Heart right ventricle (tissue), 16 donors: ENCODE measurements at regions of chr5 and their contacts with region 1.

Region 1: DNA sequence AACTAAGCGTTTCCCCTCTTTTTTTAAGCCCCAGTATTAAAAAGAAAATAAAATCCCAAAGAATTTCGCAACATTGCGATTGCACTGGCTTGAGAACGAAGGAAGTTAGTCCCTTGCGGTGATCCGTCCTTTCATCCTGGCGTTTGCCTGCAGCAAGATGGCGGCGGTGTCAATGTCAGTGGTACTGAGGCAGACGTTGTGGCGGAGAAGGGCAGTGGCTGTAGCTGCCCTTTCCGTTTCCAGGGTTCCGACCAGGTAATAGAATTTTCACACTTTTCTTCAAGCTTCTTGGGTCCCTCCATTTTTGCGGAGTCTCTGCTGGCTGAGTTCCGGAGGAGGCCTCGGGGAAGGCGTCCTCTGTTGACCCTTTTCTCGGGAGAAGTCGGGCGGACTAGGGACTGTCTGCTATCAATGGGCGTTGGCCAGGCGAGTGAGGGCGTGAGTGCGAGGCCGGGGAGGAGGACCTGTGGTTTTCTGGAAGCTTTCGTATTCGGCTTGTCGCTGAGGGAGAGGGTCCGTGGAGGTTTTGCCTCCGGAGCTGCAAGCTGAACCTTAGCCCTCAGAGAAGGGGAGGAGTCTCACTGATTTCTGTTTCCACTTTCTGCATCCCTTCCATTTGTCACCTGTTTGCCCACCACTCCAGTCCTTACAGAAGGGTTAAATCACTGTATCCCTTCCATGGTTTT is at the start of gene NDUFS4:
- DNase-seq: peak; percentile 77 to 95
- ATAC-seq: peak; percentile 95 to 98 (median 96)
- H3K4me3 ChIP-seq: peak within 1 kb of the TSS; percentile 69 to 96 (median 81)
- H3K27ac ChIP-seq: peak within 1 kb of the TSS; percentile 81 to 97 (median 92)
- H3K4me1 ChIP-seq: peaks cover 4 to 42% (median 25%) of the 10 kb centered on the region in 9 donors
- H3K27me3 ChIP-seq: peaks cover 0 to 21% (median 0%) of the 10 kb centered on the region in 7 donors
- CTCF ChIP-seq: peak in 2 of 9 donors; percentile 23 to 30
- total RNA-seq, gene NDUFS4: 156 to 268 (median 213) TPM

Region 2: DNA sequence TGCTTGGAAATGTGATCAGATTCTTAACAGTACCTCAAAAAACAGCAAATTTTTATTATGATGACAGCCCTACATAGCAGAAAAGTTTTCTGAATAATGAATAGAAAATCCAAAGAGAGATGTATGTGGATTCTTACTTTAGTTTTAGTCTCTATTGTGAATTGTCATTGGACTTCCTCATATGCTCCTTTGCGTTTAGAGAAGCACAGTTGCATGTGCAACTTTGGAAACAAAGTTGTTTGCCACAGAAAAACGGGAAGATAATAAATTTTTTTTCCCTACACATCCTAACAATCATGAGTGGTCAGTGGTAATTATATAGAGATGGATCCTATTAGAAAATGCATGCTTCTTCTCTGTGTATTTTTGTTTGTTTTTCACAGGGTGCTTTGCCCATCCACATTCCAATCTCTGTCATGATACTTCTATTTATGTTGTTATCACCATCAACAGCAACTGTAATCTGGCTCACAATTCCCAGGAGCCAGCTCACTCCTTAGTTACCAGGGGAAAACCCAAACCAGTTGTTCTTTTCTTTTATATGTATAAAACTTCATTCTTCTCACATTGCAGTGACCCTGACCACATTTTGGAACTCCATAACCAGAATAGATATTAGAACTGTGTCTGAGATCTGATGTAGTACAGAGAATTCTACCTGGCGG is 118.5 kb after region 1 on chr5:
- intact Hi-C with region 1: loop called in 1 of 10 experiments (anchors 5 kb)
- DNase-seq: no peak
- ATAC-seq: peak in 2 of 8 donors; percentile 45 to 47
- H3K4me3 ChIP-seq: no peak overlapping the region
- H3K27ac ChIP-seq: no peak overlapping the region
- H3K4me1 ChIP-seq: peaks cover 0 to 36% (median 12%) of the 10 kb centered on the region in 9 donors
- H3K27me3 ChIP-seq: no peaks in the 10 kb centered on the region
- CTCF ChIP-seq: no peak